KBM-7 (cell line): ENCODE measurements at regions of chr17 and their contacts with region 1.

Region 1: GRCh38 chr17:38674749-38675615 is at the start of gene EPOP:
- DNase-seq: peak; percentile 87

Region 2: DNA sequence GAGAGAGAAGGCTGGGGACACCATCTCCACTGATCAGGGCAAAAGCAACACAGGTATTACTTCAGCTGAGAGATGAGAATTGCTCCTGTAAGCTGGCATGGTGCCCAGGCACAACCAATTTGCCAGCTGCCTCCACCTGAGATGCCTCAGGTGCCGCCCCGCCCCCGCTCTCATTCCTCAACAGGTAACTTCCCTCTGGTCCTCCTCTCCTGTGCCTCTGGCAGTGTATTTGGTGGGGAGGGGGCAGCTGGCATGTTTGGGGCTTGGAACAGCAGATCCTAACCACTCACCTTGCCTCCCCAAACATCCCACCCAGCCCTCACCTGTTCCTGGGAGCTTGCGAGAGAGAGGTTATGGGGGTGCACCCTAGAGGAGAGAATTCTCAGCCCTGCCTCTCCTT is 66.3 kb before region 1 on chr17:
- in situ Hi-C with region 1: no loop called
- DNase-seq: no peak

Region 3: GRCh38 chr17:38729886-38730525 is 55.0 kb after region 1 on chr17 and contains the start of gene CISD3:
- in situ Hi-C with region 1: loop called (anchors 10 kb)
- DNase-seq: peak; percentile 80